IMR-90 (cell line): ENCODE measurements at regions of chr3 and their contacts with region 1.

Region 1: GRCh38 chr3:117526470-117527079 is 817.0 kb downstream of the TUSC7 start:
- DNase-seq: peak; percentile 55
- ATAC-seq: peak; percentile 48; the same call in 1 of the 2 replicates
- H3K4me3 ChIP-seq: no peak overlapping the region
- H3K27ac ChIP-seq: no peak overlapping the region
- H3K4me1 ChIP-seq: peaks cover 8% of the 10 kb centered on the region
- H3K27me3 ChIP-seq: no peaks in the 10 kb centered on the region
- CTCF ChIP-seq: peak; percentile 70
- POLR2A ChIP-seq: no peak
- RAD21 ChIP-seq: peak; percentile 73

Region 2: GRCh38 chr3:116770815-116771450 is 755.6 kb before region 1 on chr3:
- CTCF ChIA-PET with region 1: no interaction called
- POLR2A ChIA-PET with region 1: no interaction called
- dilution Hi-C with region 1: no loop called
- in situ Hi-C with region 1: no loop called
- intact Hi-C with region 1: loop called (anchors 2 kb)
- DNase-seq: peak; percentile 80
- ATAC-seq: peak; percentile 99
- H3K4me3 ChIP-seq: no peak overlapping the region
- H3K27ac ChIP-seq: no peak overlapping the region
- H3K4me1 ChIP-seq: no peaks in the 10 kb centered on the region
- H3K27me3 ChIP-seq: no peaks in the 10 kb centered on the region
- CTCF ChIP-seq: peak; percentile 100
- POLR2A ChIP-seq: no peak
- RAD21 ChIP-seq: peak; percentile 98

Region 3: GRCh38 chr3:117019082-117019713 is 507.4 kb before region 1 on chr3:
- CTCF ChIA-PET with region 1: no interaction called
- POLR2A ChIA-PET with region 1: no interaction called
- dilution Hi-C with region 1: no loop called
- in situ Hi-C with region 1: no loop called
- intact Hi-C with region 1: loop called (anchors 1 kb)
- DNase-seq: peak; percentile 76
- ATAC-seq: peak; percentile 94
- H3K4me3 ChIP-seq: no peak overlapping the region
- H3K27ac ChIP-seq: no peak overlapping the region
- H3K4me1 ChIP-seq: no peaks in the 10 kb centered on the region
- H3K27me3 ChIP-seq: no peaks in the 10 kb centered on the region
- CTCF ChIP-seq: peak; percentile 85
- POLR2A ChIP-seq: no peak
- RAD21 ChIP-seq: peak; percentile 92

Region 4: GRCh38 chr3:117059067-117059955 is 467.3 kb before region 1 on chr3:
- CTCF ChIA-PET with region 1: interaction called, 4 read pairs
- POLR2A ChIA-PET with region 1: no interaction called
- dilution Hi-C with region 1: no loop called
- in situ Hi-C with region 1: no loop called
- intact Hi-C with region 1: loop called (anchors 1 kb)
- DNase-seq: peak; percentile 46
- ATAC-seq: no peak
- H3K4me3 ChIP-seq: no peak overlapping the region
- H3K27ac ChIP-seq: no peak overlapping the region
- H3K4me1 ChIP-seq: peaks cover 3% of the 10 kb centered on the region; the same call in 1 of the 2 replicates
- H3K27me3 ChIP-seq: no peaks in the 10 kb centered on the region
- CTCF ChIP-seq: peak; percentile 62
- POLR2A ChIP-seq: no peak
- RAD21 ChIP-seq: peak; percentile 50

Region 5: GRCh38 chr3:117719316-117719926 is 192.8 kb after region 1 on chr3:
- CTCF ChIA-PET with region 1: interaction called, 3 read pairs
- POLR2A ChIA-PET with region 1: no interaction called
- dilution Hi-C with region 1: no loop called
- in situ Hi-C with region 1: no loop called
- intact Hi-C with region 1: loop called (anchors 2 kb)
- DNase-seq: peak; percentile 40
- ATAC-seq: peak; percentile 62
- H3K4me3 ChIP-seq: no peak overlapping the region
- H3K27ac ChIP-seq: no peak overlapping the region
- H3K4me1 ChIP-seq: no peaks in the 10 kb centered on the region
- H3K27me3 ChIP-seq: no peaks in the 10 kb centered on the region
- CTCF ChIP-seq: peak; percentile 72
- POLR2A ChIP-seq: no peak
- RAD21 ChIP-seq: peak; percentile 75